Endothelial cell of umbilical vein (primary cell): ENCODE measurements at regions of chr16 and their contacts with region 1.

Region 1: GRCh38 chr16:2251483-2252240 is at the start of gene ECI1:
- DNase-seq: peak; percentile 91
- H3K4me3 ChIP-seq: peak within 1 kb of the TSS; percentile 67 to 95 (median 75)
- H3K27ac ChIP-seq: peak within 1 kb of the TSS; percentile 38
- H3K4me1 ChIP-seq: peaks cover 13% of the 10 kb centered on the region
- H3K27me3 ChIP-seq: no peaks in the 10 kb centered on the region
- CTCF ChIP-seq: peak; percentile 58 to 78
- POLR2A ChIP-seq: peak; percentile 86
- total RNA-seq, gene ECI1: 43.6 and 45.8 TPM in 2 replicates

Region 2: DNA sequence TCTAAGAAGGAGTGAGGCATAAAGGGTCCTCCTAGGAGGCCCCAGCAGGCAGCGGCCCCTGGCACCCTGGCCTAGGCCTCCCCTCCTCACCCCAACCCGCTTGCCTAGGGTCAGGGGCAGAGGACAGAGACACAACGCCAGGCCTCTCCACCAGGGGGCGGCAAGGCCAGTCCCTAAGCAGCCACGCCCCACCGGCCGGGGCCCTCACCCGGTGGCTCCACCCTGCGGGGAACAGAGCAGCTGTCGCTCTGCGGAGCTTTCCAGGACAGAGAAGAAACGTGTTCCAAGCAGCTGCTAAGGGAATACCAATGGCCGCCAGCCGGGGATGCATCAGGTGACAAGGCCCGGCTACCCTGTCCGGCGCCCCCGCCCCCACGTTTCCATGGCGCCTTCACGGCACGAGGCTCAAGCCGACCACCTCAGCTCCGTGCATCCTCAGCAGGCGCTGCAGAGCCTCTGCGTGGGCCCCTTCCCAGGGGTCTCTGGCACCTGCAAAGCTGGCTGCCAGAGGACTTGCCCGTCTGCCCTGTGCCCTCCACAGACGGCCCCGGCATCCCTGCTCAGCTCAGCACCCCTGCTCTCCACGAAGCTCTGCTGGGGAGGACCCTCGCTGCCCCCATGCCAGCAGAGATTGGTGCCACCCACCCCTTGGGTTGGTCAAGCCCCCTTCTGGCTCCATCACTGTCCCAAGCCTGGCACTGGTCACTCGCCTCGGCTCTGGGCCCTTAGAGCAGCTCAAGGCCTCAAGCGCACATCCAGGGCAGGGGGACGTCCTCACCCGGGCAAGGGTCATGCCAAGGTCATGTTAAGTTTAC is 247.6 kb before region 1 on chr16:
- CTCF ChIA-PET with region 1: interaction called, 8 read pairs
- POLR2A ChIA-PET with region 1: no interaction called
- dilution Hi-C with region 1: no loop called
- intact Hi-C with region 1: loop called (anchors 1 kb)
- DNase-seq: peak; percentile 73
- H3K4me3 ChIP-seq: no peak overlapping the region
- H3K27ac ChIP-seq: no peak overlapping the region
- H3K4me1 ChIP-seq: peaks cover 42% of the 10 kb centered on the region
- H3K27me3 ChIP-seq: no peaks in the 10 kb centered on the region
- CTCF ChIP-seq: peak; percentile 97 to 99
- POLR2A ChIP-seq: no peak

Region 3: DNA sequence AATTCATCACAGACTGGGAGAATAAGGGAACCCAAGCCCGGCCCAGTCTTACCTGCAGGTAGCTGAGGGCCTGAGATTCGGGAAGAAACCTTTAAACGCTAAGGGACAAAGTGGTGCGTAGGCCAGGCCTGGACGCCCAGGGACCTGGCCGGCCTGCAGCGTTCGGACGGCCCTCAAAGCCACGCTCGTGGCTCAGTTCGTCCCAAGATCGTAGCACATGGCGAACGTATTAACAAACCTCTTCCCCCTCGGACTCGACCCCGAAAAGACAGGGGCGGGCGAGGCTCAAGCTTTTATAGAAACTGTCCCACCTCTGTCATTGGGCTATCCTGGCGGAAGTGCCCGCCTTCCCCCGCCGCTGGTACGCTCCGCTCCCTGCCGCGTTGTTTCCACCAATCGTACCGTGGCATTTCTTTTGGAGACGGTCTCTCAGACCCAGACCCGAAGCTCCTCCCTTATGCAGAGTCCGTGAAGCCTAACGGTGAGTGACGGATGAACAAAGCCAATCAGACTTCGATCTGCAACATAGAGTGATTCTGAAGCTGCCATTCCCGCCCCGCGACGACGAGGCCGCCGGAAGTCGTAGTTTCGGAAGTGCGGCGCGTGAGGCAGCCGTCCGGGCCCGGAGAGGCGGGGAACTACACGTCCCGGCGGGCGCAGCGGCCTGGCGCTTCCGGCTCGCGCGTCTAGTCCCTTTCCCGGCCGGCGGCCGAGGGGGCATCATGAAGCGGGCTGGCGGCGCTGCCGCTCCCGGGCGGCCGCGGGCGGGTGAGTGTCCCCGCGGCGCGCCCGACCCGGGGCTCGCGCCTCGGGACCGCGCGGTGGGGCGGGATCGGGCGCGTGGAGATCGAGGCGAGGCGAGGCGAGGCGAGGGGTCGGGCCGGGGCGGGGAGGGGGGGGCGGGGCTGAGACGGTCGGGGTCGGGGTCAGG is 96.3 kb before region 1 on chr16 and contains the start of gene TRAF7:
- CTCF ChIA-PET with region 1: interaction called, 11 read pairs
- POLR2A ChIA-PET with region 1: interaction called, 12 read pairs
- dilution Hi-C with region 1: no loop called
- intact Hi-C with region 1: loop called (anchors 1 kb)
- DNase-seq: peak; percentile 100
- H3K4me3 ChIP-seq: peak within 1 kb of the TSS; percentile 65 to 96 (median 84)
- H3K27ac ChIP-seq: peak within 1 kb of the TSS; percentile 44
- H3K4me1 ChIP-seq: peaks cover 41% of the 10 kb centered on the region
- H3K27me3 ChIP-seq: no peaks in the 10 kb centered on the region
- CTCF ChIP-seq: no peak
- POLR2A ChIP-seq: peak; percentile 100
- total RNA-seq, gene TRAF7: 141 and 159 TPM in 2 replicates

Region 4: DNA sequence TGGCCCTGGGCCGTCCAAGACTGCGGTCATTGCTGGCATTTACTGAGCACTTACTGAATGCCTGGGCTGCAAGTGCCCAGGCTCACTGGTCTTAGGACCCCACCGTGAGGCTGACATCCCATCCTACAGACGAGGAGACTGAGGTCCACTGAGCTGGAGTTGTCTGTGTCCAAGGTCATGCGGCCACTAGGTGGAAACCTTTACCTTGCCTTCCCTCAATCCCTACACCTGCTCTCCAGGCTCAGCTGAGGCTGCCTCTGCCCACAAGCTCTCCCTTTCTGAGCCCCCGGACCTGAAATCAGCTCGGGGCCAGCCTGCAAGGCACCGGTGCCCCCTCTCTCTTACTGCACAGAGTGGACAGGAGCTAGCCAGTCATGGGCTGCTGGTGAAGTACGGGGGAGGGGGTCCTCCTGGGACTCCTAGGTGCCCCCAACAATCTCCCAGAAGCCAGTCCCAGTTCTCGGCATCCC is 56.8 kb before region 1 on chr16:
- CTCF ChIA-PET with region 1: interaction called, 5 read pairs
- POLR2A ChIA-PET with region 1: no interaction called
- dilution Hi-C with region 1: no loop called
- intact Hi-C with region 1: loop called (anchors 5 kb)
- DNase-seq: peak; percentile 31
- H3K4me3 ChIP-seq: no peak overlapping the region
- H3K27ac ChIP-seq: no peak overlapping the region
- H3K4me1 ChIP-seq: no peaks in the 10 kb centered on the region
- H3K27me3 ChIP-seq: peaks cover 26 to 35% of the 10 kb centered on the region in 2 experiments
- CTCF ChIP-seq: peak; percentile 8 to 39
- POLR2A ChIP-seq: no peak

Region 5: DNA sequence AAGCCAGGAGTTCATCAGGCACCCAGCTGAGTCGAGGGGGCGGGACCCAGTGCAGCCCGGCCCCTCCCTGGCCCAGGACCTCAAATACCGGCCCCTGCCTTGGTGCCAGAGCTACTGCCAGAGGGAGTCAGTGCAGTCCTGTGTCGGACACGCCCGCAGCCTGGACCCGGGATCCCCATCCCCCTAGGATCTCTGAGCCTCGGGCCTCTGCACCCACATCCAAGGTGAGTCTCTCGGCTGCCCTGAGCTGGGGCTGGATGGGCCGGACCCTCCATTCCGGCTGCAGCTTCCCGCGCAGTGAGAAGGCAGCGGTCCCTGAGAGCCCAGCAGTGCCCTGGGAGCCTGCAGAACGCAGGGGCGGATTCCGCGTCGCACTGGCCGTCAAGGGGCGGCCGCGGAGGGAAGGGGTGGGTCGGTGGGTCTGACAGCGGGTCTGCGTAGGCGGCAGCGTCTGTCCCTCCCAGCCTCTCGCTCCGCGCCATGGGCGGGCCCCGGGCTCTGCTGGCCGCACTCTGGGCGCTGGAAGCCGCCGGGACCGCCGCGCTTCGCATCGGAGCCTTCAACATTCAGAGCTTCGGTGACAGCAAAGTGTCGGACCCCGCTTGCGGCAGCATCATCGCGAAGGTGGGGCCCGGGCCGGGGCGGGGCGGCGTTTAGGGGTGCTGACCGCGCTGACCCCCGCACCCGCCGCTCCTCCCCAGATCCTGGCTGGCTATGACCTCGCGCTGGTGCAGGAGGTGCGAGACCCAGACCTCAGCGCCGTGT is 15.1 kb before region 1 on chr16 and contains the start of gene DNASE1L2:
- CTCF ChIA-PET with region 1: interaction called, 11 read pairs
- POLR2A ChIA-PET with region 1: no interaction called
- dilution Hi-C with region 1: no loop called
- intact Hi-C with region 1: no loop called
- DNase-seq: peak; percentile 25
- H3K4me3 ChIP-seq: peak within 1 kb of the TSS in 1 of 3 experiments; percentile 14
- H3K27ac ChIP-seq: no peak within 1 kb of the TSS
- H3K4me1 ChIP-seq: peaks cover 10% of the 10 kb centered on the region
- H3K27me3 ChIP-seq: peaks cover 5 to 18% of the 10 kb centered on the region in 2 experiments
- CTCF ChIP-seq: no peak
- POLR2A ChIP-seq: no peak
- total RNA-seq, gene DNASE1L2: 1.0 and 1.2 TPM in 2 replicates

Region 6: GRCh38 chr16:2474877-2475412 is 223.3 kb after region 1 on chr16 and contains the start of gene TBC1D24:
- CTCF ChIA-PET with region 1: no interaction called
- POLR2A ChIA-PET with region 1: no interaction called
- dilution Hi-C with region 1: no loop called
- intact Hi-C with region 1: loop called (anchors 1 kb)
- DNase-seq: peak; percentile 82
- H3K4me3 ChIP-seq: peak within 1 kb of the TSS; percentile 33 to 72 (median 69)
- H3K27ac ChIP-seq: peak within 1 kb of the TSS; percentile 8
- H3K4me1 ChIP-seq: peaks cover 10% of the 10 kb centered on the region
- H3K27me3 ChIP-seq: peaks cover 11 to 19% of the 10 kb centered on the region in 2 experiments
- CTCF ChIP-seq: no peak
- POLR2A ChIP-seq: peak; percentile 92
- total RNA-seq, gene TBC1D24: 17.3 and 22.8 TPM in 2 replicates